ENCODE measurements at regions of chr4 and their contacts with region 1.

Region 1: DNA sequence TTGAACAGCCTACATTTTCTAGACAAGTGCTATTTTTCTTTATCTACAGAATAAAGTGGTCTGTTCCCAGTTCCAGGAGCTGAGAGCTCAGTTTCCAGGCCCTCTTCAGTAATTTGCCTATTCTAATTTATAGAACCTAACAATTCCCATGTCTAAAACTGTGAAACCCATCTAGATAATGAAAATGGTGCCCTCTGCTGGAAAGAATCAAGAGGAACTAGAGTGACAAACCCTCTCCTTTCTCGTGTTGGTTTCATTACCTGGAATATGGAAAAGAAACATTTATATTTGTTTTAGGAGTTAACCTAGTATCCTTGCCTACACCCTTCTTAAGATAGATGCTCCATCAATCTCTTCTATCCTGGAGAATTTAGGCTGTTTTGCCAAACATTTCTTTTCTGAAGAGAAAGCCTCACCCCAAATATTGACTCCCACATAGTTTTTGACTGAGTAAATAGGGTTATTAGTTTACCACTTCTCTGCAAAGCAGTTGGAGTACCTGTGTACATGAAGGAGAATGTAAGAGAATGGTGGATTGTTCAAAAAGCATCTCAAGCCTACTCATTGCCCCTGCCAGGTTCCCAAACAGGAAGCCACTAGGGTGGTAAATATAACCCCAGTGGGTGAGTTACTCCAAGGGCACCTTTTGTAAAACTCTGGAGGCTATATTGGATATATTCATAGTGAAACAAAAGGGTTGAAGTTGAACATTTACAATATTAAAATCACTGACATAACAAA is 121.6 kb downstream of the RASL11B start:
- DNase-seq: no peak
- H3K4me3 Mint-ChIP-seq: no peak overlapping the region
- H3K27ac Mint-ChIP-seq: no peak overlapping the region
- H3K4me1 Mint-ChIP-seq: no peaks in the 10 kb centered on the region
- H3K27me3 Mint-ChIP-seq: no peaks in the 10 kb centered on the region

Region 2: DNA sequence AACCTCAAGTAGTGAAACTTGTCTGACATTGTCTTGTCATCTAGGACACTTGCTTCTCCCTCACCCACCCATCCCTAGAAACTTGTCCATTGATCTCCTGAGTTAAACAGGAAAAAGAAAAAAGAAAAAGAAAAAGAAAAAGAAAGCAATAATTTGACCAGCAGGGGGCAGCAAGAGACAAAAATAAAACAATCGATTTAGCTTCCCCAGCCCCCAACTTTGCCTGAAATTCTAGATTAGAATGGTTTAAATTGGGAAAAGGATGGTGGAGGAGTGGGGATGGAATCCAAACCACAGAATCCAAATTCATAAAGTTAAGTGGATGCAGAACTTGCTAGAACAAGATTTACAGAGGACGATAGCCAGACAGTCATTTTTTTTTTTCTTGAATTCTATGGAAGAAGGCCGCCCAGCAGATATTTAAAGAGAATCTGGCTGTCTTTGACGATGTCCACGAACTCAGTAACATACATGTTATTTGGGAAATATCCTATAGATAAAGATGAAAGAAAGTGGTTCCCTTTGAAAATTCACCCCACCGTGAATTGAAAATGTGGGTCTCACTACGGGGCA is 607.5 kb before region 1 on chr4:
- CTCF ChIA-PET with region 1: interaction called, 5 read pairs
- intact Hi-C with region 1: loop called (anchors 1 kb)
- DNase-seq: peak; percentile 25
- H3K4me3 Mint-ChIP-seq: no peak overlapping the region
- H3K27ac Mint-ChIP-seq: no peak overlapping the region
- H3K4me1 Mint-ChIP-seq: no peaks in the 10 kb centered on the region
- H3K27me3 Mint-ChIP-seq: peaks cover 15% of the 10 kb centered on the region

Region 3: GRCh38 chr4:52545099-52546069 is 438.3 kb before region 1 on chr4:
- CTCF ChIA-PET with region 1: interaction called, 29 read pairs
- intact Hi-C with region 1: loop called (anchors 2 kb)
- DNase-seq: peak; percentile 71
- H3K4me3 Mint-ChIP-seq: no peak overlapping the region
- H3K27ac Mint-ChIP-seq: no peak overlapping the region
- H3K4me1 Mint-ChIP-seq: no peaks in the 10 kb centered on the region
- H3K27me3 Mint-ChIP-seq: peaks cover 10% of the 10 kb centered on the region

Region 4: DNA sequence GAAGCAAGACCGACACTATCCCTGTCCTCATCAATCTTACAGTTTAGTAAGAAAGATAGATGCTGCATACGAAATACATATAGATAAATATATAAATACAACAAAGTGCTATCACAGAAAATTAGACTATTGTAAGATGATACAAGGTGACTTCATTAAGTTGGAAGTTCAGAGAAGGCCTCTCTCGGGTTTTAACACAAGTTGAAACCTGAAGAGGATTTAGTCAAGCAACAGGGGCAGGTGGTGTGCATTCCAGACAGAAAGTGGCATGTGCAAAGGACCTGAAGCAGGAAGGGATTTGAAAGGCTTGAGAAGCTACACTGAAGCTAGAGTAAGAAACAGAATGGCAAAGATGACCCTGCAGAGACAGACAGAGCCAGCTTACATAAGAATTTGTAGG is 361.2 kb before region 1 on chr4:
- CTCF ChIA-PET with region 1: no interaction called
- intact Hi-C with region 1: loop called (anchors 2 kb)
- DNase-seq: no peak
- H3K4me3 Mint-ChIP-seq: no peak overlapping the region
- H3K27ac Mint-ChIP-seq: no peak overlapping the region
- H3K4me1 Mint-ChIP-seq: peaks cover 2% of the 10 kb centered on the region
- H3K27me3 Mint-ChIP-seq: peaks cover 2% of the 10 kb centered on the region

Region 5: DNA sequence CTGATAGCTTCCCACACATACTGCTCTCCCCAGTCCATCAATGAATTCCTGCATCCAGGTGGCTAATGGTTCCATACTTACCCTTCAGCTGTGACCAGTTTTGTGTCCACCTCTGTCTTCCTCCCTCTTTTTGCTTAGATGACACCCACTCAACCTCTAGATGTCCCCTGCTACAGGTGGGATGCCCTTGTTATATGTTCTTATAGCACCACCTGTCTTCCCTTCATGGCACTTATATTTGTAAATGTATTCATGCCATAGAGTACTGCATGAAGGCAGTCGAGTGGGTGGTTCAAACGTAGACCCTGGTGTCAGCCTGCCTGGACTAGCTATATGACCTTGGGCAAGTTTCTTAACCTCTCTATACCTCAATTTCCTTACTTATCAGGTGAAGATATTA is 318.1 kb before region 1 on chr4:
- CTCF ChIA-PET with region 1: no interaction called
- intact Hi-C with region 1: loop called (anchors 2 kb)
- DNase-seq: no peak
- H3K4me3 Mint-ChIP-seq: no peak overlapping the region
- H3K27ac Mint-ChIP-seq: no peak overlapping the region
- H3K4me1 Mint-ChIP-seq: peaks cover 6% of the 10 kb centered on the region
- H3K27me3 Mint-ChIP-seq: peaks cover 31% of the 10 kb centered on the region

Region 6: GRCh38 chr4:52813546-52813945 is 170.2 kb before region 1 on chr4:
- CTCF ChIA-PET with region 1: no interaction called
- intact Hi-C with region 1: no loop called
- DNase-seq: no peak
- H3K4me3 Mint-ChIP-seq: no peak overlapping the region
- H3K27ac Mint-ChIP-seq: no peak overlapping the region
- H3K4me1 Mint-ChIP-seq: no peaks in the 10 kb centered on the region
- H3K27me3 Mint-ChIP-seq: peaks cover 3% of the 10 kb centered on the region

Region 7: DNA sequence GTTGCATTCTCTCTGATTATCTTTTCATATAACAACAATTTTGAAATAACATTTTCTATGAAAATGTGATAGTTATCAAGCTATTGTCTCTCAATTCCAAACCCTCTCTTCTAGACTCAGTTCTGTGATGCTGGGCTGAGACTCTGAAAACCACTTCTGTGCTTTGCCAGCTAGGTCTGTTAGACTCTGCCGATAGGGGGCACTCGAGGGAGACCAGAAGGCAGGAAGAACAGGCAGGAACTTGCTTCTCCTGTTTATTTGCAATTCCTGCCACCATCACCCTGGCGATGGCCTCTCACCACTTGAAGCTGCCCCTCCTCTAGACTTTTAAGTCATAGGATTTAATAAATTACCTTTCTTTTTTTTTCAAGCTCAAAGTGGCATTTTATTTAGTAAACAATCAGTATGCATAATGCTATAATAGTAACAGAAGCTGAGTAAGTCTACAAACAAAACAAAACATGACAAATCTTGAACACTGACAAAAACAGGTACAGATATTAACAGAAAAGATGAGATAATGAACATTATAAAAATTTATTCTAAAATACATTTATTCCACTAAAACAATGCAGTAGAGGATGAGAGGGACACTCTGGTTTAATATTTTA is 71.9 kb before region 1 on chr4:
- CTCF ChIA-PET with region 1: interaction called, 3 read pairs
- intact Hi-C with region 1: loop called (anchors 1 kb)
- DNase-seq: peak; percentile 85
- H3K4me3 Mint-ChIP-seq: no peak overlapping the region
- H3K27ac Mint-ChIP-seq: no peak overlapping the region
- H3K4me1 Mint-ChIP-seq: peaks cover 5% of the 10 kb centered on the region
- H3K27me3 Mint-ChIP-seq: no peaks in the 10 kb centered on the region

Region 8: DNA sequence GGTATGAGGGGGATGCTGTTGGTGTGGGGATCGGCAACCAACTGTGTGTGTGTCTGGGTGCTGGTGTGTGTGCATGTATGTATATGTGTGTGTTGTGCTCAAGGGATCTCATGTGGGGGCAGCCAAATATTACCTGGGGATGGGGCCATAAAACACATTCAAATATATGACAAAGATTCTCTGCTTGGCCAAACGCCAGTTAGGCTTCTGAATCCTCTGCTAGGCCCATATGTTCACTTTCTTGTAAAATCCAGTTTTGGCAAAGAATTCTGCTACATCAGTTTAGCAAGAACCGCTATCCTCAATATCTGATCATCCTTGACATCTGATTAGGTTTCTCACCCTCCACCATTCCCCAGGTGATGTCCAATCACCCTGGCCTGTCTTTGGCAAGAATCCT is 15.0 kb before region 1 on chr4:
- CTCF ChIA-PET with region 1: no interaction called
- intact Hi-C with region 1: no loop called
- DNase-seq: no peak
- H3K4me3 Mint-ChIP-seq: no peak overlapping the region
- H3K27ac Mint-ChIP-seq: no peak overlapping the region
- H3K4me1 Mint-ChIP-seq: no peaks in the 10 kb centered on the region
- H3K27me3 Mint-ChIP-seq: no peaks in the 10 kb centered on the region

Measured in activated naive CD4-positive, alpha-beta T cell treated with anti-CD3 and anti-CD28 coated beads for 36 hours (primary cell).